GM10248 (cell line): ENCODE measurements at regions of chr4 and their contacts with region 1.

Region 1: GRCh38 chr4:120144634-120145033 is 78.0 kb upstream of the MAD2L1 start:
- DNase-seq: no peak
- CTCF ChIP-seq: no peak

Region 2: DNA sequence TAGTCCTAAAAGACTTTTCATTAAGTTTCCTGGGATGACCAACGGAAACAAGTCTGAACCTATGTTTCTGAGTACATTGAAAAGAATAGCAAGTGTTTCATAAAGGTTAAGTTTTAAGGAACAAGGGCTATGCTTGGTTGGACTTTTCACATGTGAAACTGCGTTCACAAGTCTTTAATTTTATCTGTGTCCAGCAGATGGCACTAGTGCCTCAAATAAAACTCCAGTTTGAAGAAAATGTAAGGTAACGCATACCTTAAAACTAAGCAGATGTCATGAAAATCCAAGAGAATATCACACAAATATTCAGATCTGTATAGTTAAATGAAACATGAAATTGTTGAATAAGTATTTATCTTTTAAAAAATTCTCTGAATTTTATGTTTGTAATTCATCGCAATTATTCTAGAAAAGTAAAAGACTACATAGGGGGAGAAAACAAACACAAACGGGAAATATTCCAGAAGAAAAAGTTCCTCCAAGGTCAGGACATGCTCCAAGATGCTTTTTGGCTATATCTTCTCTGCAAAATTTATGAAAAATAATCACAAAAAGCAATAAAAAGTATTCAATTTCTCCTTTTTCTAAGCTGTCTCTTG is 11.6 kb after region 1 on chr4:
- CTCF ChIA-PET with region 1: interaction called, 16 read pairs
- POLR2A ChIA-PET with region 1: no interaction called
- DNase-seq: peak; percentile 16
- CTCF ChIP-seq: peak; percentile 62